Panc1 (cell line): ENCODE measurements at regions of chr10 and their contacts with region 1.

Region 1: GRCh38 chr10:93475861-93476269 is 6.3 kb downstream of the MYOF start:
- DNase-seq: peak; percentile 90
- ATAC-seq: peak; percentile 81
- H3K4me3 ChIP-seq: peak overlapping the region in 1 of 2 experiments; percentile 12; a peak in 2 of 4 replicates
- H3K27ac ChIP-seq: peak overlapping the region; percentile 100
- H3K4me1 ChIP-seq: peaks cover 79% of the 10 kb centered on the region
- H3K27me3 ChIP-seq: no peaks in the 10 kb centered on the region
- CTCF ChIP-seq: no peak

Region 2: GRCh38 chr10:93463678-93464476 is 12.0 kb before region 1 on chr10:
- CTCF ChIA-PET with region 1: interaction called, 10 read pairs
- POLR2A ChIA-PET with region 1: interaction called, 16 read pairs
- in situ Hi-C with region 1: no loop called
- intact Hi-C with region 1: no loop called
- DNase-seq: no peak
- ATAC-seq: no peak
- H3K4me3 ChIP-seq: no peak overlapping the region
- H3K27ac ChIP-seq: peak overlapping the region; percentile 100
- H3K4me1 ChIP-seq: peaks cover 88% of the 10 kb centered on the region
- H3K27me3 ChIP-seq: no peaks in the 10 kb centered on the region
- CTCF ChIP-seq: no peak